ENCODE measurements at regions of chr5 and their contacts with region 1.

Region 1: DNA sequence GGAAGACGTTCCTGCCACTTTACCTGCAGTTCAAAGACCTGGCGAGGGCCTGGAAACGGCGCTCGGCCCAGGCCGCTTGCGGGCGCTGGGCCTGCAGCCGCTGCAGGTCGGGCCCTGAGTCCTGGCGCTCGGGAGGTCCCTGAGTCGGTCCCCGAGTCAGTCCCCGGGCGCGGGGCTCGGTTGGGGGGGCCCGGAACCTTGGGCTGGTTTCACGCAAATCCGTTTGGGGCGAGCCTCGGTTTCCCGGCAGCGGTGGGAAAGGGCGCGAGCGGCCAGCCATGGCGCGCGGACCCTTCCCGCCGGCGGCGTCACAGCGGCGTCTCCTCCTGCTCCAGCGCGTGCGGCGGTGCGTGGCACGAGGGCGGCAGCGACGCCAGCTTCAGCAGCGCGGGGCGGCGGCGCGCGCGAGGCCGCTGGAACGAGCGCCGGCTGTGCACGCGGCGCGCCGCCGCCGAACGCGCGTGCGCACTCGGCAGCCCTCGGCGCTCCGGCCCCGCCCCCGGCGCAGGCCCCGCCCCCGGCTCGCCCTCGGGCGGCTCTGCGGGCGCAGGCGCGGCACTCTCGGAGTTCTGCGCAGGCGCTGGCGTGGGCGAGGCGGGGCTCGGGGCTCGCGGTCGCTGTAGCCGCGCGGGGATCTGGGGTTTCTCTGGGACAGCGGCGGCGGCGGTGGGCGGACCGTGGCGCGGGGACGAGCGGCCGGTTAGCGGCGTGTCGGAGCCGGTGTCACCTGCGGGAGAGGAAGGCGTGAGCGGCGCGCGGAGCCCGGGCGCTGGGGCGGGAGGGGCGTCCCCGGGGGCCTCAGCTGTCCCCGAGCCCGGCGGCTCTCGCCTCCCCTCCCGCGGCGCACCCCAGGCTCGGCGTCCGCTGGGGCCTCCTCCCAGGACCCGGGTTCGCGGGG is 29.9 kb downstream of the EXOC3 start:
- DNase-seq: peak; percentile 96
- H3K4me3 Mint-ChIP-seq: peak overlapping the region; percentile 90
- H3K27ac Mint-ChIP-seq: peak overlapping the region; percentile 85
- H3K4me1 Mint-ChIP-seq: peaks cover 17% of the 10 kb centered on the region
- H3K27me3 Mint-ChIP-seq: peaks cover 10% of the 10 kb centered on the region

Region 2: DNA sequence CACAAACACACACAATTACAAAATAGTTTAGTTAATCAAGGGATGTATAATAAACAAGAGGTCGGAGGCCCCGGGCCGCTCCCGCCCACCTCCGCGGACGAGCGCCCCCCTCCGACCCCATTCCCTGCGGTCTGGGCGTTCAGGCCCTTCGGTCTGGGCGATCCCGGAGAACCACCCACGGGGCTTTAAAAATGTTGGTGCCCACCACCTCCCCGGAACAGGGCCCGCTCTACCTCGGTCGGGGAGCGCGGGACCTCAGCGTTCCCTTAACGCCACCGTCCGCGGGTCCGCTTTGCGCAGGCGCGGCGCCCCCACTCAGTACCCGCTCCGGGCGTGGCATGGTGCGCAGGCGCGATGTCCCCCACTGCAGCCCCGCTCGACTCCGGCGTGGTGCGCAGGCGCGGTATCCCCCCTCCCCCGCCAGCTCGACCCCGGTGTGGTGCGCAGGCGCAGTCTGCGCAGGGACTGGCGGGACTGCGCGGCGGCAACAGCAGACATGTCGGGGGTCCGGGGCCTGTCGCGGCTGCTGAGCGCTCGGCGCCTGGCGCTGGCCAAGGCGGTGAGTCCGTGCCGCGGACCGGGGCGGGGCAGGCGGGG is 254.9 kb before region 1 on chr5 and contains the starts of genes CCDC127 and SDHA:
- intact Hi-C with region 1: no loop called
- DNase-seq: peak; percentile 100
- H3K4me3 Mint-ChIP-seq: peak within 1 kb of the TSS; percentile 97
- H3K27ac Mint-ChIP-seq: peak within 1 kb of the TSS; percentile 93
- H3K4me1 Mint-ChIP-seq: peaks cover 47% of the 10 kb centered on the region
- H3K27me3 Mint-ChIP-seq: no peaks in the 10 kb centered on the region
- total RNA-seq, gene CCDC127: 7.1 and 7.7 TPM in 2 replicates
- total RNA-seq, gene SDHA: 147 and 150 TPM in 2 replicates

Region 3: GRCh38 chr5:442335-443238 is 30.3 kb before region 1 on chr5 and contains the start of gene EXOC3:
- intact Hi-C with region 1: loop called (anchors 1 kb)
- DNase-seq: peak; percentile 95
- H3K4me3 Mint-ChIP-seq: peak within 1 kb of the TSS; percentile 98
- H3K27ac Mint-ChIP-seq: peak within 1 kb of the TSS; percentile 98
- H3K4me1 Mint-ChIP-seq: peaks cover 30% of the 10 kb centered on the region
- H3K27me3 Mint-ChIP-seq: no peaks in the 10 kb centered on the region
- total RNA-seq, gene EXOC3: 64.5 and 67.2 TPM in 2 replicates

Region 4: DNA sequence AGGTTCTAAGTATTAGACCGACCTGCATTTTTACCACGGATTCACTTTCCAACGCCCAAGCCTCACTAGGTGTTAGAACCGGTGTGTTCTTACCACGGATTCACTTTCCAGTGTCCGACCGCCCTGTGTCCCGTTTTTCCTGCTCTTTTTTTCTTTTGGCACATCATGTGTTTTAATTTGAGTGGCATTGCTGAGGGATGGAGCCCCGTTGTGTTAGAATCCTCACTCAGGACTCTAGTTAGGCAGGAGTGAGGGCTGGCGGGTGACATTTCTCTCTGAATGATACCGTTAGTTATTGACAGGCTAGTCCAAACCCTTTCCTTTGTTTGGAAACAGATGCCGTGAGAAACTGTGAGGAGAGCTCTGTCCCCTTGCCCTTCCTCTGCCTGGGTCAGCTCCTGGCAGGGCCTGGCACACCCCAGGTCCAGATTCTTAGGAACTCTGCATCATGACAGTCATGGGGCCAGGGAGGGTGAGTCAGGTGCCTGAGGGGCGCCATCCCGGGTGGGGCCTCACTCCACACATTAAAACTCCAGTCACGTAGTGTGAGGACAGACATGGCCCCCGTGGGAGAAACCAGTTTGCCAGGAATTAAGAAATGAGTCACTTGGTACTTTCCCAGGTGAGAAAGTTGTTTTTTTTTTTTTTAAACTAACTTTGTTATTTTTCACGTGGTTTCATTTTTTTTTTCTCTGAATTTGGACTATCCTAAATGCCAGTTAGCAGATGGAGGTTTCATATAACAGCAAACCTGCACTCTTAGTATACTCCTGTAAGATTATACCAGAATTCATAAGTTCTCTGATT is 14.2 kb before region 1 on chr5:
- intact Hi-C with region 1: loop called (anchors 2 kb)
- DNase-seq: peak; percentile 87
- H3K4me3 Mint-ChIP-seq: peak overlapping the region; percentile 71
- H3K27ac Mint-ChIP-seq: peak overlapping the region; percentile 96
- H3K4me1 Mint-ChIP-seq: peaks cover 50% of the 10 kb centered on the region
- H3K27me3 Mint-ChIP-seq: no peaks in the 10 kb centered on the region